ENCODE measurements at regions of chr5 and their contacts with region 1.

Region 1: DNA sequence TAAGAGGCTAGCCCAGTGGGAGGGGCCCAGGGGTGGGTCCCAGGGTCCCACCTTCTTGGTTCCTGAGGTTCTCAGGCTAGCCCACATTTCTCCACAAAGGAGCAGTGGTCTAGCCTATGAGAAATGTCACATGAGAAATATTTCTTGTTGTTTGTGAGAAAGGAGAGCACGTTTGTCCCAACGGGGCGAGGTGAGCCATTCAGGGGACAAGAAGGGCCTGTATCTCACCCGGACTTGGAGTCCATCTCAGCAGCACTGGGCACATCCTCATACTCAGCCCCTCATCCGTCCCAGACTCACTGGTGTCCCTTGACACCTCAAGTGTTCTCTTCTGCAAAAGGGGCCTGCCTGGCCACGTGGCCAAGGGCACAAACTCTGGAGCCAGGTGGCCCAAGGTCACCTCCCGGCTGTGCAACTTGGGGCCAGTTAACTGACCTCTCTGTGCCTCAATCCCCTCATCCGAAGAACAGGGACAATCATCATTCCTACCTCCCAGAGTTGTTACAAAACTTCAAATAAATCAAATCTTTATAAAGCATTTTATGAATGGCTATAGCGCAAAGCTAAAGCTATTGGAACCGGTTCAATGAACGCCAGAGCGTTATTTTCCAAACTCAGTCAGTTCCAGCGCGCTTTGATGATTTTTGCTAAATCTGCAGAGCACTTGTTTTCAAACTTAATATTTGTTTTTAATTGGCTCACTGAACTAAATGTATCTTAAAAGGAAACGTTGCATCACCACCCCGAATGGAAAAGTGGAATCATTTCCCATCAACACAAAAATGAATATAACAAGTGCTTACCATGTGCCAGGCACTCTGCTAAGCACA is 49.5 kb downstream of the DUSP1 start:
- DNase-seq: no peak
- H3K4me3 ChIP-seq: no peak overlapping the region
- H3K27ac ChIP-seq: no peak overlapping the region
- H3K4me1 ChIP-seq: peaks cover 5% of the 10 kb centered on the region in 2 experiments; a peak in 2 of 4 replicates
- H3K27me3 ChIP-seq: no peaks in the 10 kb centered on the region
- CTCF ChIP-seq: no peak
- EP300 ChIP-seq: no peak
- RAD21 ChIP-seq: no peak

Region 2: GRCh38 chr5:172458976-172459782 is 262.3 kb before region 1 on chr5:
- CTCF ChIA-PET with region 1: no interaction called
- POLR2A ChIA-PET with region 1: no interaction called
- DNase-seq: no peak
- H3K4me3 ChIP-seq: no peak overlapping the region
- H3K27ac ChIP-seq: no peak overlapping the region
- H3K4me1 ChIP-seq: peaks cover 5 to 11% of the 10 kb centered on the region in 2 experiments; a peak in 1 of 4 replicates
- H3K27me3 ChIP-seq: no peaks in the 10 kb centered on the region
- CTCF ChIP-seq: no peak
- EP300 ChIP-seq: no peak
- RAD21 ChIP-seq: no peak

Region 3: GRCh38 chr5:172733131-172733973 is 11.8 kb after region 1 on chr5:
- CTCF ChIA-PET with region 1: interaction called, 21 read pairs
- POLR2A ChIA-PET with region 1: no interaction called
- DNase-seq: no peak
- H3K4me3 ChIP-seq: no peak overlapping the region
- H3K27ac ChIP-seq: no peak overlapping the region
- H3K4me1 ChIP-seq: no peaks in the 10 kb centered on the region
- H3K27me3 ChIP-seq: no peaks in the 10 kb centered on the region
- CTCF ChIP-seq: no peak
- EP300 ChIP-seq: no peak
- RAD21 ChIP-seq: no peak

Region 4: DNA sequence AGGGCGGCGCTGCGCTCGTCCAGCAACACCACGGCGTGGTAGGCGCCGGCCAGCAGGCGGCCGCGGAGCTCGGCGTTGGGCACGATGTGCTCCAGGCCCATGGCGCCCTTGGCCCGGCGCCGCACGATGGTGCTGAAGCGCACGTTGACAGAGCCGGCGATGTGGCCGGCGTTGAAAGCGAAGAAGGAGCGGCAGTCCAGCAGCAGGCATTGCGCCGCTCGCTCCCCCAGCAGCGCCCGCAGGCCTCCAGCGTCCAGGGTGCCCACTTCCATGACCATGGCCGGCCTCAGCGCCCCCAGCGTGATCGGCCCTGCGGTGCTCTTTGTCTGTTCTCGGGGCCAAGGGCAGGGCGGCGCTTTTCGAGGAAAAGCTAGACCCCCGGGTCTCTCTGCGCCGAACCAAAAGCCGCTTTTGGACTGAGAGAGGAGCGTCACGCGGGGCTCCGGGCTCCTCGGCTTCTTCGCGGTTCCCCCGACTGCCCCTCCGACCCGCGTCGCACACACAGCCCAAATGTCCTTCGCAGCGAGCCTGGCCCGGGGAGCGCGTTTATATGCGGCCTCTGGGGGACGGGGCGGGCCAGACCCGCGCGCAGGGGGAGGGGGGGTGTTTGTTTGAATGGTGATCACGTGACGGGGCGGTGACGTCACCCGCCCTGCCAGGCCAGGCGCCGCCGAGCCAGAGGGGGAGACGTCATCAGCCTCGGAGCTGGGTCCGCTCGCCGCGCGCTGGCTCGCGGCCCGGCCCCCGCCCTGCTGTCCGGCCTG is 49.3 kb after region 1 on chr5 and contains the start of gene DUSP1:
- CTCF ChIA-PET with region 1: interaction called, 57 read pairs
- POLR2A ChIA-PET with region 1: interaction called, 8 read pairs
- DNase-seq: peak; percentile 99
- H3K4me3 ChIP-seq: peak within 1 kb of the TSS; percentile 89 to 93
- H3K27ac ChIP-seq: peak within 1 kb of the TSS; percentile 97 to 100
- H3K4me1 ChIP-seq: peaks cover 23 to 36% of the 10 kb centered on the region in 2 experiments
- H3K27me3 ChIP-seq: no peaks in the 10 kb centered on the region
- CTCF ChIP-seq: peak; percentile 50
- EP300 ChIP-seq: no peak
- RAD21 ChIP-seq: peak; percentile 36
- polyA plus RNA-seq, gene DUSP1: 373 and 455 TPM in 2 replicates

Region 5: DNA sequence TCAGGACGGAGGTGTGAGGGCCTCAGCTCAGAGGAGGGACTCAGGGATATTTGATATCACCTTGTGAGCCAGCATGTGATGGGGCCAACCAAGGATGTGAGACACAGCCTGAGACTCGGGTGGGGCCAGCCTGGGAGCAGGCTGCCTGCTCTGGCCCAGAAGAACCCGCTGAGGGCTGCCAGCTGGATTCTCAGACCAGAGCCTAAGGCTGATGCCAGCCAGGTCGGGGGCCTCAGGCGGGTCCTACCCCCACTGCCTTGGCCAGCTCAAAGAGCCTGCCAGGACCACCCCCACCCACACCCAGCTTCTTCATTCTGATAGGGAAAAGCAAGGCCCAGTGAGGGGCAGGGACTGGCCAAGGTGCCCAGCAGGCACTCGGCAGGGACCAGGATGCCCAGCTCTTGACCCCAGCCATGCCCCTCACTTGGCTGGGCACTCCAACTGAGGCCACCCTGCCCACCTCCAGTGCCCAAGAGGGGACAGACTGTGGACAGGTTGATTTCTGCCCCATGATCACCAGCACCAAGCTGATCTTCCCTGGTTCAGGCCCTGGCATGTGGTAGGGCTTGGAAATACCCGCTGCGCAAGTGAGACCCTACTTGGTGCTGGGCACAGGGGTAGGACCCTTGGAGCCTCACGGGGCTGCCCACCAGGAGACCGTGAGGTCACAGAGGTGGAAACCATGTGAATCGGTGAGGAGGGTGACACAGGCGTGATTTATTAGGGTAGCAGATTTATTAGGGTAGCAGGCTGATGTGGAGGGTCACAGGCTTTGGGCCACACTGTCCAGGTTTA is 70.0 kb after region 1 on chr5:
- CTCF ChIA-PET with region 1: no interaction called
- POLR2A ChIA-PET with region 1: no interaction called
- DNase-seq: no peak
- H3K4me3 ChIP-seq: no peak overlapping the region
- H3K27ac ChIP-seq: no peak overlapping the region
- H3K4me1 ChIP-seq: peaks cover 0 to 9% of the 10 kb centered on the region in 2 experiments; a peak in 2 of 4 replicates
- H3K27me3 ChIP-seq: no peaks in the 10 kb centered on the region
- CTCF ChIP-seq: no peak
- EP300 ChIP-seq: no peak
- RAD21 ChIP-seq: no peak